ENCODE measurements at regions of chr12 and their contacts with region 1.

Region 1: DNA sequence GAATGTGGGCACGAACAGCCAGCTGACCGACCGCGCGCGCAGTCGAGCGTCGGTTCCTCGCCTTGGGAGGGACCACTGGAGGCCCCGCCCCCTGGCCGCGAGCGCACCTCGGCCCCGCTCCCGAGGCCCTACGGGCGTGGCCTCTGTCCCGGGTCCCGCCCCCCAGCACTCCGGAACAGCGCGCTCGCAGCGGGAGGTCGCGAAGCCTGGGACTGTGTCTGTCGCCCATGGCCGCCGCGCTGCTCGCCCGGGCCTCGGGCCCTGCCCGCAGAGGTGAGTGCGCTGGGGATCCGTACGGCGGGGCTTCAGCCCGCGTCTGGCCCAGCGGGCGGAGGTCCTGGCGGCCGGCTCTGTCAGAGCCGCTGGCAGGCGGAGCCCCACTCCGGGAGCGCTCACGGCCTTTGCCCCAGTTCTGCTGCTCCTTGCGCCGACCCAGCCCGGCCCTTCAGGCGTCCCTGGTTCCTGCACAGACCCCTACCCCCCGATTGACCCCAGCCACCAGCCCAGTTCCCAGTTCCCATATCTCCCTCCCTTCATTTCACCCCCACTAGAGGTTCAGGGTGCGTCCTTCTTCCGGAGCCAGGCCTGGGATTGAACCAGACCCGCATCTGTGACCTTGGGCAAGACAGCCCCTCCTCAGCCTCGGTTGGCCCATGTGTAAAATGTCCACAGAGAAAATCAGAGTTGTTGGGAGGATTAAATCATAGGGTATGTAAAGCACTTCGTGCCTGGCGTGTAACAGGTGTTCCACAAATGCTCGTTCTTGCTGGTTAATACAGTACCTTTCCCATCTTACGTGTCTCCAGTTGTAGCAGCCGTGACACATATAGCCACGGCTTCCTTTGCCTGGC is at the start of gene ACADS:
- DNase-seq: peak; percentile 94
- H3K4me3 ChIP-seq: peak within 1 kb of the TSS; percentile 64 to 85 (median 71)
- H3K27ac ChIP-seq: peak within 1 kb of the TSS; percentile 74 to 89 (median 80)
- H3K4me1 ChIP-seq: peaks cover 11 to 37% (median 23%) of the 10 kb centered on the region in 4 donors
- H3K27me3 ChIP-seq: no peaks in the 10 kb centered on the region
- CTCF ChIP-seq: peak in 1 of 3 experiments; percentile 28
- EP300 ChIP-seq: no peak
- POLR2A ChIP-seq: no peak
- total RNA-seq, gene ACADS: 31.6 to 64.2 (median 46.0) TPM

Region 2: GRCh38 chr12:120249875-120250795 is 475.7 kb before region 1 on chr12:
- intact Hi-C with region 1: no loop called
- DNase-seq: no peak
- H3K4me3 ChIP-seq: peak overlapping the region; percentile 23 to 44 (median 30)
- H3K27ac ChIP-seq: peak overlapping the region; percentile 90 to 97 (median 93)
- H3K4me1 ChIP-seq: peaks cover 89 to 100% (median 96%) of the 10 kb centered on the region in 4 donors
- H3K27me3 ChIP-seq: no peaks in the 10 kb centered on the region
- CTCF ChIP-seq: no peak
- EP300 ChIP-seq: no peak
- POLR2A ChIP-seq: no peak

Region 3: GRCh38 chr12:120904197-120904773 is 178.4 kb after region 1 on chr12 and contains the start of gene SPPL3:
- intact Hi-C with region 1: loop called (anchors 10 kb)
- DNase-seq: peak; percentile 97
- H3K4me3 ChIP-seq: peak within 1 kb of the TSS; percentile 87 to 98 (median 94)
- H3K27ac ChIP-seq: peak within 1 kb of the TSS; percentile 86 to 92 (median 89)
- H3K4me1 ChIP-seq: peaks cover 16 to 32% (median 29%) of the 10 kb centered on the region in 4 donors
- H3K27me3 ChIP-seq: no peaks in the 10 kb centered on the region
- CTCF ChIP-seq: no peak
- EP300 ChIP-seq: no peak
- POLR2A ChIP-seq: no peak
- total RNA-seq, gene SPPL3: 18.4 to 32.1 (median 21.8) TPM

Measured in esophagus muscularis mucosa (tissue), 4 donors.